Heart right ventricle (tissue), 16 donors: ENCODE measurements at regions of chr16 and their contacts with region 1.

Region 1: GRCh38 chr16:74438492-74439041 is 17.3 kb upstream of the CLEC18B start:
- DNase-seq: no peak
- ATAC-seq: peak in 3 of 8 donors; percentile 19 to 44 (median 33)
- H3K4me3 ChIP-seq: no peak overlapping the region
- H3K27ac ChIP-seq: no peak overlapping the region
- H3K4me1 ChIP-seq: peaks cover 0 to 18% (median 0%) of the 10 kb centered on the region in 9 donors
- H3K27me3 ChIP-seq: no peaks in the 10 kb centered on the region
- CTCF ChIP-seq: no peak

Region 2: GRCh38 chr16:74309789-74310781 is 128.5 kb before region 1 on chr16:
- intact Hi-C with region 1: loop called in 3 of 10 experiments (anchors 5 to 10 kb)
- DNase-seq: no peak
- ATAC-seq: peak in 3 of 8 donors; percentile 39 to 55 (median 43)
- H3K4me3 ChIP-seq: no peak overlapping the region
- H3K27ac ChIP-seq: no peak overlapping the region
- H3K4me1 ChIP-seq: peaks cover 0 to 30% (median 6%) of the 10 kb centered on the region in 9 donors
- H3K27me3 ChIP-seq: no peaks in the 10 kb centered on the region
- CTCF ChIP-seq: peak; percentile 45 to 84 (median 77)

Region 3: DNA sequence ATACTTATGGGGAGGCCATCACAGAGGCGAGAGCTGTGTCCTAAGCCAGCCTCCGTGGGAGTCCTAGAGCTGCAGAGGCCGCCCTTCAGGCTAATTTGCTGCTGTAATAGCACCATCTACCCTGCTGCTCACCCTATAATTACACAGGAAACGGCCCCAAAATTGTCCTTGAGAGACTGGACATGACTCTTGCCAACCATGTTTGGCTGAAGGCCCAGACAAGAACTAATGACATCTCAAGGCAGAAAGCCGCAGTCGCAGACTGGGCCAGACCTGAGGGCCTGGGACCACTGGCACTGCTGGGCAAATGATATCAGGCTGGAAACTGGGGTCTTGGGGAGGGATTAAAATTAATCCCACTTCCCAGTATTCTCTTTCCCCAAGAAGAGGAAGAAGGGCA is 117.9 kb before region 1 on chr16:
- intact Hi-C with region 1: loop called in 2 of 10 experiments (anchors 10 kb)
- DNase-seq: peak in 1 of 2 donors; percentile 36
- ATAC-seq: peak in 4 of 8 donors; percentile 15 to 41 (median 27)
- H3K4me3 ChIP-seq: no peak overlapping the region
- H3K27ac ChIP-seq: peak overlapping the region in 8 of 10 donors; percentile 63 to 92 (median 84)
- H3K4me1 ChIP-seq: peaks cover 12 to 39% (median 30%) of the 10 kb centered on the region in 9 donors
- H3K27me3 ChIP-seq: no peaks in the 10 kb centered on the region
- CTCF ChIP-seq: no peak

Region 4: DNA sequence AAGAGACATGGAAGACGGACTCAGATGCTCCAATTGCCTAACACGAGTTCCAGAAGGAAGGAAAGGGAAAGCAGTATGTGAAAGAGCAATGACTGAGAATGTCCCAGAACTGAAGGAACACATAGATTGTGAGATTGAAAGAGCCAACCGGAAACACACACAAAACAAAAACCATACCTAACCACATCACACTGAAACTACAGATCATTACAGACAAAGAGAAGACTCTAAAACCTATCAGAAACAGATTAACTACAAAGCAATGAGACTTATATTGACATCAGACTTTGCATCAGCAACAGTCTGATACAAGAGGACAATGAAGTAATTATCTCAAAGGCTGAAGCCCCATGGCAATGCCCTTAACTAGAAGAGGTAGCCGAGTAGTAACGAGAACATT is 28.3 kb after region 1 on chr16:
- intact Hi-C with region 1: no loop called
- DNase-seq: no peak
- ATAC-seq: no peak
- H3K4me3 ChIP-seq: no peak overlapping the region
- H3K27ac ChIP-seq: peak overlapping the region in 2 of 10 donors; percentile 26 to 38
- H3K4me1 ChIP-seq: peaks cover 0 to 10% (median 0%) of the 10 kb centered on the region in 9 donors
- H3K27me3 ChIP-seq: no peaks in the 10 kb centered on the region
- CTCF ChIP-seq: no peak